Activated B cell treated with CpG ODN at 0.5 μM for 24 hours (primary cell): ENCODE measurements at regions of chr5 and their contacts with region 1.

Region 1: DNA sequence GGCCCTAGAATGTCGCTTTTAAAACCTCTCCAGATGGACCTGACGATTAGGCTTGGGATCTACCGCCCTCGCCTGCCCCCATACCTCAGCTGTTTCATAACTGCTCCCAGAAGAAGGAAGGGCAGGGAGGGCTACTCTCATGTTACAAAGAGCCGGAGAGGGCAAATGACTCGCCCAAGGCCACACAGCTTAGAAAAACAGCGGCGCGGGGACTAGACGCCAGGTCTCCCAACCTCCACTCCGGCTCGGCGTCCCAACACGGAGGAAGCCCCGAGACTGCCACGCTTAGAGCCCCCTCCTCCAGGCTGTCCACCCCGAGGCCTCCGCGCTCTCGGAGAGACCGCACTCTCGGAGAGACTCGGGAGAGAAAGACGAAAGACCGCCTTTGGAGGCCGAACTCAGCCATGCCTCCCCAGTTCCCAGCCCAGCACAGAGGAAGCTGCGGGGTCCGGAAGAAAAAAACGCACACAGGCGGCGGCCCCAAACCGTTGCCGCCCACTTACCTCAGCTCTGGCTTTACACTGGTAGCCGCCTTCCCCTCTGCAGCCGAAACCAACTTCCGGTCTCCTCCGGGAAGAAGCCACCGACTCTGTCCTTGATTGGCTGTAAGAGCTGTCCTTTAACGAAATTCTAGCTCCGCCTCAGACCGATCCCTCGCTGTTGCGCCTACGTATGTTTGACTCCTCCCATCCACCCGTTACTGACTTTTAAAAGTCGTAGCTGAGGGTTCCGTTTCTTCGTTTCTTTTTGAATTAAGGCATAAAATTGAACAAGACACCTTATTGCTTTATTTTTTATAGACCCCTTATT is at the start of gene MED7:
- DNase-seq: peak; percentile 75
- ATAC-seq: peak; percentile 97
- H3K4me3 Mint-ChIP-seq: peak within 1 kb of the TSS; percentile 99
- H3K27ac Mint-ChIP-seq: peak within 1 kb of the TSS; percentile 99
- H3K4me1 Mint-ChIP-seq: peaks cover 45% of the 10 kb centered on the region
- H3K27me3 Mint-ChIP-seq: no peaks in the 10 kb centered on the region
- CTCF ChIP-seq: no peak
- total RNA-seq, gene MED7: 14.0 and 16.1 TPM in 2 replicates

Region 2: DNA sequence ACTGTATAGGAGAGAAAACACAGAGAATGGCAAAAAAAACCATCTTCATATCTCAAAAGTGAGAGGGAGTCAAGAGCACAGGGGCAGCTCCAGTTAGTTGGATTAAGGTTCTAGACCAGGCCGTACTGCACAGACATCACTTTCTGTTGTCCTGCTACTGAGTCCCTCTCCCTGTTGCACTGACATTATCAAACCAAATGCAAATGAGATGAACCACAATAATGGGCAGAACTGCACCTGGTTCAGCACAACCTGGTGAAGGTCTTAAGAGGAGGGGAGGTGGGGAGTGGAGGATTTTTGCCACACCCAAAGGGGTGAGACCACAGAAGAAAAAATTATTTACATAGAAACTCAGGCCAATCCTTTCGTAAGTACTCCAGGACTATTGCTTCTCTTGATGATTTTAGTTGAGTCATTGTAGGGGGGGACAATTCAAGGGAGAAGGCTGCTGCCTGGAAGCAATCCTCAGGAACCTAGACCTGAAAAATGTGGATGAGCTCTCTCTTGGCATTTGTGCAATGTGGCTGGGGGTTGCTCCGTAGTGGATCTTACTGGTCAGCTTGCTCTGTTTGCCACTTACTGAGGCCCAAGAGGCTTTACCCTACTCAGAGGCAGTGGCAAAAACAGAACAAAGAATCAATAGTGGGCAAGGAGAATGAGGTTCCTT is 387.0 kb before region 1 on chr5:
- CTCF ChIA-PET with region 1: no interaction called
- POLR2A ChIA-PET with region 1: no interaction called
- intact Hi-C with region 1: no loop called
- DNase-seq: no peak
- ATAC-seq: no peak
- H3K4me3 Mint-ChIP-seq: no peak overlapping the region
- H3K27ac Mint-ChIP-seq: no peak overlapping the region
- H3K4me1 Mint-ChIP-seq: peaks cover 4% of the 10 kb centered on the region
- H3K27me3 Mint-ChIP-seq: no peaks in the 10 kb centered on the region
- CTCF ChIP-seq: no peak

Region 3: GRCh38 chr5:157108976-157109375 is 33.5 kb before region 1 on chr5 and contains the start of gene HAVCR2:
- CTCF ChIA-PET with region 1: no interaction called
- POLR2A ChIA-PET with region 1: interaction called, 18 read pairs
- intact Hi-C with region 1: loop called (anchors 1 kb)
- DNase-seq: no peak
- ATAC-seq: peak; percentile 84
- H3K4me3 Mint-ChIP-seq: peak within 1 kb of the TSS; percentile 72
- H3K27ac Mint-ChIP-seq: peak within 1 kb of the TSS; percentile 89
- H3K4me1 Mint-ChIP-seq: peaks cover 35% of the 10 kb centered on the region
- H3K27me3 Mint-ChIP-seq: no peaks in the 10 kb centered on the region
- CTCF ChIP-seq: no peak
- total RNA-seq, gene HAVCR2: 0.64 and 0.84 TPM in 2 replicates

Region 4: GRCh38 chr5:157172403-157172802 is 29.9 kb after region 1 on chr5:
- CTCF ChIA-PET with region 1: interaction called, 3 read pairs
- POLR2A ChIA-PET with region 1: interaction called, 13 read pairs
- intact Hi-C with region 1: loop called (anchors 1 kb)
- DNase-seq: peak; percentile 44
- ATAC-seq: peak; percentile 96
- H3K4me3 Mint-ChIP-seq: peak overlapping the region; percentile 62
- H3K27ac Mint-ChIP-seq: peak overlapping the region; percentile 86
- H3K4me1 Mint-ChIP-seq: peaks cover 30% of the 10 kb centered on the region
- H3K27me3 Mint-ChIP-seq: no peaks in the 10 kb centered on the region
- CTCF ChIP-seq: no peak

Region 5: DNA sequence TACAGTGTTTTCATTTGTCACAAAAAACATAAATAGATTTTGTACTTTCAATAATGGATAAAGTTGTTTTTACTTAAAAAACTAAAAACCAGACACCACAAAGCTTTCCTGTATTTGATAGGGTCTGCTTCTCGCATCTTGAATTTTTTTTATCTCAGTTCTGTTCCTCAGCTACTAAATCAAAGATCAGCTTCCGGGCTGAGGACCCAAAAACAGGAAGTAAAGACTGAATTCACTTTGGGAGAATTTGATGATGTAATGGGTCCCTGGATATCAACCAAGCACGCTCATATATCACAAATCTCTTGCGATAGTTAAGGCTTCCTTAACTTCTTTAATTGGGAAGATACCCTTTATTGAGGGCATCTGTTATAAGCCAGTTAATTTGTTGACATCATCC is 62.2 kb after region 1 on chr5:
- CTCF ChIA-PET with region 1: no interaction called
- POLR2A ChIA-PET with region 1: no interaction called
- intact Hi-C with region 1: no loop called
- DNase-seq: no peak
- ATAC-seq: peak; percentile 68
- H3K4me3 Mint-ChIP-seq: no peak overlapping the region
- H3K27ac Mint-ChIP-seq: peak overlapping the region; percentile 53
- H3K4me1 Mint-ChIP-seq: peaks cover 6% of the 10 kb centered on the region
- H3K27me3 Mint-ChIP-seq: no peaks in the 10 kb centered on the region
- CTCF ChIP-seq: no peak

Region 6: GRCh38 chr5:157271740-157272271 is 129.3 kb after region 1 on chr5:
- CTCF ChIA-PET with region 1: no interaction called
- POLR2A ChIA-PET with region 1: interaction called, 47 read pairs
- intact Hi-C with region 1: no loop called
- DNase-seq: peak; percentile 74
- ATAC-seq: peak; percentile 86
- H3K4me3 Mint-ChIP-seq: peak overlapping the region; percentile 73
- H3K27ac Mint-ChIP-seq: peak overlapping the region; percentile 99
- H3K4me1 Mint-ChIP-seq: peaks cover 93% of the 10 kb centered on the region
- H3K27me3 Mint-ChIP-seq: no peaks in the 10 kb centered on the region
- CTCF ChIP-seq: no peak

Region 7: DNA sequence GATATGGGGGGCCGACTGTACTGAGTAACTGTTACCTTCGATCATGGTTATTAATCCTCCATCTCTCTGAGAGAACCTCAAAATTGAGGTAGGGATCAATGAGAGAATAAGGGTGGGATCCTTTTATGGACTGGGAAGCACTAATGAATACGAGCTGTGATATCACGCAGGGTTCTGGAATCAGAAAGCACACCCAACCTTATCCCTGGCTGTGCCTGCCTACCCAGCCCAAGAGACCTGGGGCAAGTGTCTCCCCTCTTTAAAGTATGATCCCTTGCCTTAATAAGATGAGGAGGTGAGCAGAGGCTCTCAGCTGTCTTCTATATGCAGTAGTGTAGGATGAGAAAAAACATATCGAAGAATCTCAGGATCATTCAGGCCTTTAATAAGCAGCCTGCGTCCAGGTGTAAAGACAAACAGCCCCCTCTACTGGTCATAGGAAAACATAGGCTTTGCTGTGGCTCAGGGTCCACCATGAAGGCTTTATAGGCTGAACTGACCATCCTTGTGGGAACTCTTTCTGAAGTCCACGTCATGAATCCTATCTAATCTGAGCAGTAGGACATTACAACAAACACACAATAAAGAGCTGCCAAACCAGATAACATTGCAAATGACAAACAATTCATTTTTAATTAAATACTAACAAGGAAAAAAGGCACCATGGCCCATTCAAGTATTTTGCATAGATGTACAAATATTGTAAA is 334.3 kb after region 1 on chr5:
- CTCF ChIA-PET with region 1: no interaction called
- POLR2A ChIA-PET with region 1: no interaction called
- intact Hi-C with region 1: loop called (anchors 10 kb)
- DNase-seq: no peak
- ATAC-seq: no peak
- H3K4me3 Mint-ChIP-seq: no peak overlapping the region
- H3K27ac Mint-ChIP-seq: peak overlapping the region; percentile 68
- H3K4me1 Mint-ChIP-seq: peaks cover 76% of the 10 kb centered on the region
- H3K27me3 Mint-ChIP-seq: no peaks in the 10 kb centered on the region
- CTCF ChIP-seq: no peak

Region 8: DNA sequence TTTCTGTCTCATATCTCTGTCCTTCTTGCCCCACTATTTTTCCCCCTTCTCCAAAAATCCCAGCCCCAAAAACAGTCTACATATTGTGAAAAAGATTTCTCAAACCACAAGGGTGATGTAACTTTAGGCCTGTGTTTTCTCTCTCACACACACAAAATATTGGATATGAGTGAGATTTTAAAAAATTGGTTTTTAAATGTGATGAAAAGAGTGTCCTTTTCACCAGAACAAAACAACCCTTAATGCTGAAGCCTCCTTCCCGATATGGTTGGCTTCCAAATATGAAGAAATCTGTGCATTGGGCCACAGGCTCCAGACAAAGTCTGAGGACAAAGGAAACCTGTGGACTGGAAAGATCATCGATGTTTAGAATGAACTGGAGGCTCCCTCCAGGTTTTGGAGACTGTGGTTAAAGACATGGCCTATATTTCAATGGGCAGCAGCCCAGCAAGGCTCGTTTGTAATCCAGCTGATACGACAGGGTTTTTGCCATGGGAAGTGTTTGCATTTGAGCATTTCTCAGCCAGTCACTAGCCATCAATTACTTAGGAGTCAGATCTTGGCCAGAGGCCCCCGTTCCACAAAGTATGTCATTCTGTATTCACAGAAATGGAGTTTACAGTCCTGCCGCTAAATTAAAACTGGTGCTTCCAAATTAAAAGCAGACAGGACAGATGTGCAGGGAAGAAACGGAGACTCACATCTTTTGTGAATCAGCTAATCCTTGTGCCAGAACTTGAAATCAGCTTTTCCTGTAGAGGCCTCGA is 1410.9 kb after region 1 on chr5:
- CTCF ChIA-PET with region 1: no interaction called
- POLR2A ChIA-PET with region 1: no interaction called
- intact Hi-C with region 1: no loop called
- DNase-seq: no peak
- ATAC-seq: no peak
- H3K4me3 Mint-ChIP-seq: no peak overlapping the region
- H3K27ac Mint-ChIP-seq: no peak overlapping the region
- H3K4me1 Mint-ChIP-seq: peaks cover 10% of the 10 kb centered on the region
- H3K27me3 Mint-ChIP-seq: no peaks in the 10 kb centered on the region
- CTCF ChIP-seq: no peak